Ascending aorta (tissue), 2 donors: ENCODE measurements at regions of chr4 and their contacts with region 1.

Region 1: DNA sequence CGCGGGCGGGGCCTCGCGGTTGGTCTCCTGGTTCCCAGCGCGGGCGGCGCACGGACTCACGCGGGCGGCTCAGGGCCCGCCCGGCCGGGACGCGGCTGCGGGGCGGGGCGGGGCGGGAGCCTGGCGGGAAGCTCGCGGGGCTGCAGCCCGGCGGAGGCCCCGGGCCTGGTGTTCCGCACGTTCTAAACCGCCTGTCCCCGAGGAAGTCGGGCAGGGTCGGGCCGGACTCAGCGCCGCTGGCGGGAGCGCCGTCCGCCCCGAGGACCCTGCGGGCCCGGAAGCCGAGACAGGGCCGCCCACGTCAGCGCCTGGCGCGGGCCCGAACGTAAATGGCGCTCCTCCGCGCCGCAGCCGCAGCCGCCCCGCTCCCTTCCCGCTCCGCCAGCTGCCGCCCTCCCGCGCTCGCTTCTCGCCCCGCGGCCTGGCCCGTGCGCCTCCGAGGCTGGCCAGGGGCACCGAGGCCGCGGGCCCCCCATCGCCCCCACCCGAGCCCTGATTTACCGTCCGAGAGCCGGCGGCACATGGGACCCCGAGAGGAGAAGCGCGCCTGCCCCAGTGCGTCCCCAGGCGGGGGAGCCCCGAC is 309 bp upstream of the CTBP1 start:
- DNase-seq: peak in 1 of 2 donors; percentile 90
- H3K4me3 ChIP-seq: peak overlapping the region; percentile 78 to 95
- H3K27ac ChIP-seq: peak overlapping the region; percentile 90 to 95
- H3K4me1 ChIP-seq: peaks cover 25 to 40% of the 10 kb centered on the region in 2 donors
- H3K27me3 ChIP-seq: no peaks in the 10 kb centered on the region
- CTCF ChIP-seq: no peak

Region 2: DNA sequence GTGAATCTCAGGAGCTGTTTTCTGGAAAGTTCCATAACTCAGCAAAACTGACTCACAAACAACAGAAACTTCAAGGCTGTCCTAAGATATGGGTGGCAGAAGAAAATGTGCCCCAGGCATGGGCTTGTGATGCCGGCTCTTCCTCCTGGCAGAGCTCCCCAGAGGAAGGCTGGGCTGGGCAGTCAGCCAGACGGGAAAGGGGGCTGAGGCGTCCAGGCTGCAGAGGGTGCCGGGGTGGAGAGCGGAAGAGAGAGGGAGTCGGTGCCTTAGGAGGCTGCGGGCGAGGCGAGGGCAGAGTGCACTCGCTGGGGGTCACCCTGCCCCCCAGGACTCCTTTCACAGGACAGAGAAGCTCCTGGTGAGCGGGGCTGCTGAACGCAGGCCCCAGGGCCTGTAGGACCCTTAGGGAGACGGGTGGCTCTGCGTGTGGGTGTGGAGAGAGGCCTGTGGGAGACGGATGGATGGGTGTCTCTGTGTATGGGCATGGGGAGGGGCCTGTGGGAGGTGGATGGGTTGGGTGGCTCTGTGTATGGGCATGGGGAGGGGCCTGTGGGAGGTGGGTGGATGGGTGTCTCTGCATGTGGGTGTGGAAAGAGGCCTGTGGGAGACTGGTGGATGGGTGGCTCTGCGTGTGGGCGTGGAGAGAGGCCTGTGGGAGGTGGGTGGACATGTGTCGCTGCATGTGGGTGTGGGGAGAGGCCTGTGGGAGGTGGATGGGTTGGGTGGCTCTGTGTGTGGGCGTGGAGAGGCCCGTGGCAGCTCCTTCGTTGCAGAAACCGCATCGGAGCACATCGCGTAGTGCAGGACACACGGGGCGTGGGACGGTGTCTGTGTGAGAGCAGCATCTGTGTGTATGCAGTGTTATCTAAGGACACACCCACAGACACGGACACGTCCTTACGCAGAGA is 527.7 kb before region 1 on chr4:
- intact Hi-C with region 1: no loop called
- DNase-seq: no peak
- H3K4me3 ChIP-seq: no peak overlapping the region
- H3K27ac ChIP-seq: no peak overlapping the region
- H3K4me1 ChIP-seq: no peaks in the 10 kb centered on the region
- H3K27me3 ChIP-seq: no peaks in the 10 kb centered on the region
- CTCF ChIP-seq: no peak

Region 3: DNA sequence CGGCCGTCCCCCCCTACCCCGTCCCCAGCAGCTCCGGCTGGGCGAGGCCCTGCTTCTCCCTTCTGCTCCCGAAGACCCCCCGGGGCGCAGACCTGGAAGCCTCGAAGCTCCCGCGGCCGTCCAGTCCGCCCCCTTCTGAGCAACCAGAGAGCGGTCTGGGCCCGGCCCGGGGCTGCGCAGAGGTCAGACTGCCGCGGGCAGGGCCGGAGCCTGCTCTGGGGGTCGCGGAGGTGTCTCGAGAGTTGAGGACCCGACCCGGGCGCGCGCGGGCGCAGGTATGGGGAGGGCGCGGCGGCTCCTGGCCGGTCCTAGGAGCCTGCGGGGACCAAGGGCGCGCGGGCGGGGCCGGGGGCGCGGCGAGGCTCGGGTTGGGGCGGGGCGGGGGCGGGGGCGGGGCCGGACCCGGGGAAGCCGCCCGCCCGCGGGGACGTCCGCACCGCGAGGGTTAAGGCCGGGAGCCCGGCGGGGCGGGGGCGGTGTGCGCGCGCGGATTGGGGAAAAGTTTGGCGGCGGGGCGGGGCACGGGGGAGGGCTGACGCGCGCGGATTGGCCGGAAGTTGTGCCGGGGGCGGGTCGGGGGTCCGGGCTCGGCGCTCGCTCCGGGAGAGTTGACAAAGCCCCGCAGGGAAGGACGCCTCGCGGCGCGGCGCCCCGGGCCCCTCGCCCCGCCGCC is 238.1 kb before region 1 on chr4 and contains the start of gene FGFRL1:
- intact Hi-C with region 1: loop called (anchors 5 kb)
- DNase-seq: peak; percentile 60 to 95
- H3K4me3 ChIP-seq: peak within 1 kb of the TSS; percentile 72 to 89
- H3K27ac ChIP-seq: peak within 1 kb of the TSS; percentile 88 to 89
- H3K4me1 ChIP-seq: peaks cover 21 to 23% of the 10 kb centered on the region in 2 donors
- H3K27me3 ChIP-seq: no peaks in the 10 kb centered on the region
- CTCF ChIP-seq: no peak
- total RNA-seq, gene FGFRL1: 79.1 TPM

Region 4: GRCh38 chr4:1113311-1114009 is 135.8 kb before region 1 on chr4 and contains the start of gene RNF212:
- intact Hi-C with region 1: no loop called
- DNase-seq: no peak
- H3K4me3 ChIP-seq: peak within 1 kb of the TSS; percentile 26 to 52
- H3K27ac ChIP-seq: no peak within 1 kb of the TSS
- H3K4me1 ChIP-seq: no peaks in the 10 kb centered on the region
- H3K27me3 ChIP-seq: peaks cover 5% of the 10 kb centered on the region
- CTCF ChIP-seq: no peak
- total RNA-seq, gene RNF212: not detected

Region 5: DNA sequence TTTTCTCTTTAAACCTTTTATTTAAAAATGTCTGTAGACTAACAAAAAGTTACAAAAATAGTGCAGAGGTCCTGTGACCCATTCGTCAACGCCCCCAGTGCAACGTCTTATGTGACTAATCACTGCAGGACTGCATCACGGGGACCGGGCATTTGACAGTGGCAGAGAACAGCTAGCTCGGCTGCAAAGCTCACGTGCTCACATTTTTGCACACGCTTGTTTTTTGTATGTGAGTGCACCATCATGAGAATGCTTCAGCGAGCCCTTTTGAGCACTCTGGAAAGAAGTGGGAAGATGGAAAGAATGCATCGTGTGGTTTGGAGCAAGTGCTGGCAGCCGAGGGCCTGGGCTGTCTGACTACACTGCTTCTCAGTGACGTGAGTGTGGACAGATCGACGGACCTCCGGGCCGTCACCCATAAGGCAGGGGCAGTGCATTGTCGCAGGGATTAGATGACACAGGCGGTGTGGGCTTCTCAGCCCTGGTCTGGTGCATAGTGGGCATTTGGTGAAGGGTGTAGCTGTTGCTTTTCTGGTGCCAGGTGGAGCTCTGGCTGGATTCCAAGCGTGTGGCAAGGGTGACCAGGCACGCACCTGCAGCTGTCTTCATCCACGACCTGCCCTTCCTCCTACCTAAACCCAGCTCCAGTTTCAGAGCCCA is 94.6 kb before region 1 on chr4:
- intact Hi-C with region 1: loop called (anchors 1 kb)
- DNase-seq: peak; percentile 67 to 93
- H3K4me3 ChIP-seq: peak overlapping the region in 1 of 2 donors; percentile 48
- H3K27ac ChIP-seq: peak overlapping the region; percentile 77 to 79
- H3K4me1 ChIP-seq: peaks cover 9 to 12% of the 10 kb centered on the region in 2 donors
- H3K27me3 ChIP-seq: no peaks in the 10 kb centered on the region
- CTCF ChIP-seq: no peak

Region 6: DNA sequence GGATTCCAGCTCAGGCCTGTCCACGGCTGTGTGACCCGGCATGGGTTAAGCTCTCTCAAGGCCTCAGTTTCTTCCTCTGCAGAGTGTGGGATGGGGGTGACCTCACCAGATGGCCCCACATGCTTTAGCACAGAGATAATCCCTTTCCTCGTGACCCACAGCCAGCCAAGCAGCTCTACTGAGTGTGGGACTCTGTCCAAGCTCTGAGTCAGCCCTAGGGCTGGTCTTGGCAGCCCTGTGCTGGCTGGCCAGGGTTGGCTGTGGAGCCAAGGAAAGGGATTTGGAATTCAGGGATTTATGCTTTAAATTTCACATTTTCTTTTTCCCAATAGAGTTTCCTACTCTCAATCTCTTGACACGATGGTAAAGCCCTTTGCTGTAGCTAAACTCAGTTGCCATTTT is 57.1 kb before region 1 on chr4:
- intact Hi-C with region 1: loop called (anchors 2 kb)
- DNase-seq: peak; percentile 76 to 94
- H3K4me3 ChIP-seq: peak overlapping the region in 1 of 2 donors; percentile 25
- H3K27ac ChIP-seq: peak overlapping the region; percentile 79 to 87
- H3K4me1 ChIP-seq: peaks cover 18 to 23% of the 10 kb centered on the region in 2 donors
- H3K27me3 ChIP-seq: no peaks in the 10 kb centered on the region
- CTCF ChIP-seq: no peak

Region 7: GRCh38 chr4:1289207-1290164 is 40.2 kb after region 1 on chr4 and contains the start of gene MAEA:
- intact Hi-C with region 1: loop called (anchors 1 kb)
- DNase-seq: peak; percentile 85 to 98
- H3K4me3 ChIP-seq: peak within 1 kb of the TSS; percentile 86 to 96
- H3K27ac ChIP-seq: peak within 1 kb of the TSS; percentile 67 to 77
- H3K4me1 ChIP-seq: peaks cover 13 to 27% of the 10 kb centered on the region in 2 donors
- H3K27me3 ChIP-seq: no peaks in the 10 kb centered on the region
- CTCF ChIP-seq: no peak
- total RNA-seq, gene MAEA: 56.3 TPM

Region 8: DNA sequence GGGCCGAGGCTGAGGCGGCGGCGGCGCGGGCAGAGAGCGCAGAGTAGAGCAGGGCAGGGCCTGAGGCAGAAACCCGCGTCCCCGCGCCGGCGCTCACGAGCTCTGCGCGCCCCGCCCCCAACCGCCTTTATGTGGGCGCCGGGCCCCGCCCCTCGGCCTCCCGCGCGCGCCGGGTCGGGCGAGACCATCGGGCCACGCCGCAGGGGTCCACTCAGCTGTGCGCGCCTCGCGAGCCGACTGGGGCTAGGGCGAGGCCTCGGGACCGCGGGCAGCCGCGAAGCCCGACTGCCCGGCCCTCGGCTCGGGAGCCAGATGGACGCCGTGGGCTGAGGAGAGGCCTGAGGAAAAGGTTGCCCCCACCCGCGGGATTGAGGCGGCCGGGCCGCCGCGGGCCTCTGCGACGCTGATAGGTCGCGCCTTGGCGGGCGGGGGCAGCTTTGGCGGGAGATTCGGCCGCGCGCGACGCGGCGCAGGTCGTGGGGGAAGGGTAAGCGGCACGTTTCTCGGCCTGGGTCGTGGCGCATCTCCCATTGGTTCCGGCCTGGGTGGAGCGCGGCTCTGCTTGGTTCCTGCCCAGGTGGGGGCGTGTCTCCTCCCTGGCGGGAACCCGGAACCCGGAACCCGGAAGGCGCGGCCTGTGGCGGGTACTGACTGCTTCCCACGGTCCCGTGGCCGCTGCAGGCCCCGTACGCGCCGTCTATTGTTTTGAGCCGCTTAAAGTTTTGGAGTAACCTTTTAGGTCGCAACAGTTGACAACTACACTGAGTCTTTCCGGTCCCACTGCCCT is 463.2 kb after region 1 on chr4 and contains the start of gene SLBP:
- intact Hi-C with region 1: loop called (anchors 5 kb)
- DNase-seq: peak; percentile 86 to 98
- H3K4me3 ChIP-seq: peak within 1 kb of the TSS; percentile 93 to 94
- H3K27ac ChIP-seq: peak within 1 kb of the TSS; percentile 99 to 100
- H3K4me1 ChIP-seq: peaks cover 0 to 10% of the 10 kb centered on the region in 2 donors
- H3K27me3 ChIP-seq: no peaks in the 10 kb centered on the region
- CTCF ChIP-seq: no peak
- total RNA-seq, gene SLBP: 218 TPM

Region 9: GRCh38 chr4:1870578-1871443 is 621.6 kb after region 1 on chr4 and contains the start of gene NSD2:
- intact Hi-C with region 1: loop called (anchors 5 kb)
- DNase-seq: peak; percentile 35 to 93
- H3K4me3 ChIP-seq: peak within 1 kb of the TSS; percentile 99 to 100
- H3K27ac ChIP-seq: peak within 1 kb of the TSS; percentile 98 to 99
- H3K4me1 ChIP-seq: peaks cover 4 to 5% of the 10 kb centered on the region in 2 donors
- H3K27me3 ChIP-seq: no peaks in the 10 kb centered on the region
- CTCF ChIP-seq: no peak
- total RNA-seq, gene NSD2: 19.9 TPM